IMR-90 (cell line): ENCODE measurements at regions of chr18 and their contacts with region 1.

Region 1: DNA sequence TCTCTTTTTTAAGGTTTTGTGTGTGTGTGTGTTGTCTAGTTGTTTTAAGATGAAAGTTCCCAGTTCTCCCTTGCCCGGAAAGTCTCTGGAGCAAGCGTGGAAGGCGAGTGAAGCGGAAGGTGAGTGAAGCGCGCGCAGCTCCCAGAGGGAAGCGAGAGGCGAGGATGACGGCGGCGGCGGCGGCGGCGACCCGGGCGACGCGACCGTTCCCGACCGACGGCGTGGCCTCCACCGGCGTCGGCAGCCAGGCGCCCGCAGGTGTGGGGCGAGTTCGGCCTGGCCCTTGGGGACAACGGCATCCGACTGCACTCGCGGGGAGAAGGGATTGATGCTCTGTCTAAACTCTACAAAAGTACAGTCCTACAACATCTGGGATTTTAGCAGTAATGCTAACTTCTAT is 321.9 kb downstream of the CELF4 start:
- DNase-seq: no peak
- ATAC-seq: no peak
- H3K4me3 ChIP-seq: no peak overlapping the region
- H3K27ac ChIP-seq: no peak overlapping the region
- H3K4me1 ChIP-seq: no peaks in the 10 kb centered on the region
- H3K27me3 ChIP-seq: peaks cover 26% of the 10 kb centered on the region
- CTCF ChIP-seq: no peak
- POLR2A ChIP-seq: no peak
- RAD21 ChIP-seq: no peak

Region 2: GRCh38 chr18:36782710-36783109 is 461.0 kb before region 1 on chr18:
- CTCF ChIA-PET with region 1: no interaction called
- POLR2A ChIA-PET with region 1: interaction called, 17 read pairs
- dilution Hi-C with region 1: no loop called
- in situ Hi-C with region 1: no loop called
- intact Hi-C with region 1: no loop called
- DNase-seq: no peak
- ATAC-seq: no peak
- H3K4me3 ChIP-seq: no peak overlapping the region
- H3K27ac ChIP-seq: no peak overlapping the region
- H3K4me1 ChIP-seq: peaks cover 10% of the 10 kb centered on the region
- H3K27me3 ChIP-seq: no peaks in the 10 kb centered on the region
- CTCF ChIP-seq: no peak
- POLR2A ChIP-seq: no peak
- RAD21 ChIP-seq: no peak

Region 3: DNA sequence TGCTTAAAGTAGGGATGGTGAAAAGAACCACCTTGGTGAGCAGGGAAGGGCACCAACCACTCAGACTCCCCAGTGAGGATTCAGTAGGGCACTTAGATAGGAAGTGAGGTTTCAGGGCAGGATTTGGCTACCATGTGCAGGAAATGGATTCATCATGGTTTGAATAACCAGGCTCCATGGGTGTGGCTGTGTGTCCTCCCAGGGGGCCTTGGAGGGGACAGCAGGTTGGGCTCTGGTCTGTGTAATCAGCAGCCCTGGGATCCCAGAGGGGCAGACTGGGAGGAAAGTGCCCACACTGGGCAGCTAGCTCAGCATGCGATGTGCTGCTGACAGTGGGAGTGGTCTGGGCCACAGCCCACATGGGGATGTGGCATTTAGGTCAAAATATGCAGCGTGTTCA is 97.3 kb after region 1 on chr18:
- CTCF ChIA-PET with region 1: no interaction called
- POLR2A ChIA-PET with region 1: no interaction called
- dilution Hi-C with region 1: no loop called
- in situ Hi-C with region 1: no loop called
- intact Hi-C with region 1: no loop called
- DNase-seq: no peak
- ATAC-seq: no peak
- H3K4me3 ChIP-seq: no peak overlapping the region
- H3K27ac ChIP-seq: no peak overlapping the region
- H3K4me1 ChIP-seq: no peaks in the 10 kb centered on the region
- H3K27me3 ChIP-seq: peaks cover 12% of the 10 kb centered on the region; the same call in 1 of the 2 replicates
- CTCF ChIP-seq: no peak
- POLR2A ChIP-seq: no peak
- RAD21 ChIP-seq: no peak